SK-N-SH (cell line): ENCODE measurements at regions of chr10 and their contacts with region 1.

Region 1: GRCh38 chr10:43078987-43079275 is 2.1 kb downstream of the RET start:
- DNase-seq: peak; percentile 86
- H3K4me3 ChIP-seq: peak overlapping the region; percentile 53 to 61; a peak in 3 of 4 replicates
- H3K27ac ChIP-seq: peak overlapping the region in 1 of 2 experiments; percentile 96; a peak in 2 of 4 replicates
- H3K4me1 ChIP-seq: peaks cover 0 to 70% of the 10 kb centered on the region in 2 experiments; a peak in 2 of 4 replicates
- H3K27me3 ChIP-seq: peaks cover 6% of the 10 kb centered on the region
- CTCF ChIP-seq: peak; percentile 67
- EP300 ChIP-seq: no peak
- RAD21 ChIP-seq: peak; percentile 77

Region 2: DNA sequence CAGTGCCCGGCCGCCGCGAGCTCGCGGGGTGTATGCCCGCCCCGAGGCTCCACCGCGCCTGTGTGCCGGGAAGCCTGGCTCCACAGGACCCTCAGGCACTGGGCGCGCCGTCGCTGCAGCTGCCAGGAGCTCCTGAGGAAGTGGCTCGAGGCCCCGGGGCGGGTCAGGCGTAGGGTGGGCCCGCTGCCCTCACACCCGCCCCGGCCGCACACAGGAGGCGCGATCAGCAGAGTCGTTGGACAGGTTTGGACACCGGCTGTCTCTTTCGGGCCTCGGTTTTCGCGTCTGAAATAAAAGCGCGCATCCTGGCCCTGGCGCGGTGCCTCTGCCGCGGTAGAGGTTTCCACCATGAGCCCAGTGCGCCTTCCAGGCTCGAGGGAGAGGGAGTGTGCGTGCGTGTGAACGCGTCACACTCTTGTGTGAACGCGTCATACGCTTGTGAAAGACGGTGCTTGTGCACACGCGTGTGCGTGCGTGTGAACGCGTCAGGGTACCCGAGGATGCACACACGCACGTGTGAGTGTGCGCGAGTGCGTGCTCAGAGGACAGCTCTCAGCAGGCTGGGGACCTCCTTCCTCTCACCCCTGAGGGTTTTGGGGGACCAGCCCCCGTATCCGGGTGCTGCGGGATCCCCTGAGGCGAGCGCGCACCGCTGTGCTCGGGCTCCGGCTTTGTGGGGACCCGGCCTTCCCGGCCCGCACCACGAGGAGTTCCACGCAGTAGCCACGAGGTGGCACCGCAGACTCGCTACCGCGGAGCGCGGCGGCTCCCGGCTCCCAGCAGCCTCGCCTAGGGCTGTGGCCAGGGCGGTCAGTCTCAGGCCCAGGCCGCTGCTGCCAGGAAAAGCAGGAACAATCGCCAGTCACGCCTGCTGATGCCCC is 212.6 kb before region 1 on chr10:
- CTCF ChIA-PET with region 1: interaction called, 143 read pairs
- POLR2A ChIA-PET with region 1: interaction called, 18 read pairs
- DNase-seq: peak; percentile 92
- H3K4me3 ChIP-seq: no peak overlapping the region
- H3K27ac ChIP-seq: peak overlapping the region in 1 of 2 experiments; percentile 74; a peak in 2 of 4 replicates
- H3K4me1 ChIP-seq: peaks cover 0 to 43% of the 10 kb centered on the region in 2 experiments; a peak in 2 of 4 replicates
- H3K27me3 ChIP-seq: no peaks in the 10 kb centered on the region
- CTCF ChIP-seq: peak; percentile 67
- EP300 ChIP-seq: no peak
- RAD21 ChIP-seq: peak; percentile 89

Region 3: GRCh38 chr10:42940487-42941294 is 138.2 kb before region 1 on chr10:
- CTCF ChIA-PET with region 1: interaction called, 11 read pairs
- POLR2A ChIA-PET with region 1: no interaction called
- DNase-seq: peak; percentile 60
- H3K4me3 ChIP-seq: no peak overlapping the region; a peak in 1 of 4 replicates
- H3K27ac ChIP-seq: peak overlapping the region in 1 of 2 experiments; percentile 83; a peak in 2 of 4 replicates
- H3K4me1 ChIP-seq: peaks cover 0 to 48% of the 10 kb centered on the region in 2 experiments; a peak in 2 of 4 replicates
- H3K27me3 ChIP-seq: no peaks in the 10 kb centered on the region
- CTCF ChIP-seq: no peak
- EP300 ChIP-seq: no peak
- RAD21 ChIP-seq: peak; percentile 3; the same call in 1 of the 2 replicates

Region 4: DNA sequence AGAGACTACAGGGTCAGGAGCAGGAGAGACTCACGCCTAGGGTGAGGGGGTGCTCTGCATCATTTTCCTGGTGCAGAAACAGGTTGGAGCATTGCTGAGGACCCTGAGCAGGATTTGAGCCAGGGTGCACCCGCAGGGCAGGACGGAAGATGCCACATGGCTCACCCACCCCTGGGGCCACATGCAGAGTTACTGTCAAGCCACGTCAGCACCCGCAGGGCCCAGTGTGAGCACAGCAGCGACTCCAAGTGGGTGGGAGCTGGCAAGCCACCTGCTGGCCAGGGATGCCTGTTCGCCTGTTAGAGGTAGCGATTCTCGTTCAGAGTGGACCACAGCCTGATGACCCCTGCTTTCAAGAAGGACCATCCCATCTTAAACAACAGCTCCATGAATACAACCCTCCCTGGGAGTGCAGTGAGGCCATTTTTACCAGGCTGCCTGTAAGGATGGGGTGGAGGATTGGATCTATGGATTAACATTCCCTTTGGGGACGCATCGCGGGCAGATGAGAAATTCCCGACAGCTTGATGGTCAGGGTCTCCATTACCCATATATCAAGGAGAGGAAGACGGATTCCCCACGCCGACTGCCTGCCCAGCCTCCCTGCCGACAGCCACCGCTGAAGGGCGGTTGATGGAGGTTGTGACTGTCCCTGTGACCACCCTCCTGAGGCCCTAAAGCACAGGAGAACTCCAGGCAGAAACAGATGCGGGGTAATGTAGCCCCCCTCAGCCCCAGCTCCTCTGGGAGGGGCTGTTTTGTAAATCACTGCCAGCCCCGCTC is 103.2 kb before region 1 on chr10:
- CTCF ChIA-PET with region 1: interaction called, 130 read pairs
- POLR2A ChIA-PET with region 1: interaction called, 75 read pairs
- DNase-seq: peak; percentile 44
- H3K4me3 ChIP-seq: no peak overlapping the region
- H3K27ac ChIP-seq: peak overlapping the region in 1 of 2 experiments; percentile 88; a peak in 2 of 4 replicates
- H3K4me1 ChIP-seq: peaks cover 0 to 76% of the 10 kb centered on the region in 2 experiments; a peak in 2 of 4 replicates
- H3K27me3 ChIP-seq: no peaks in the 10 kb centered on the region
- CTCF ChIP-seq: no peak
- EP300 ChIP-seq: no peak
- RAD21 ChIP-seq: no peak; the same call in 1 of the 2 replicates

Region 5: GRCh38 chr10:42987121-42987541 is 91.8 kb before region 1 on chr10:
- CTCF ChIA-PET with region 1: interaction called, 130 read pairs
- POLR2A ChIA-PET with region 1: interaction called, 14 read pairs
- DNase-seq: no peak
- H3K4me3 ChIP-seq: no peak overlapping the region
- H3K27ac ChIP-seq: no peak overlapping the region; a peak in 1 of 4 replicates
- H3K4me1 ChIP-seq: peaks cover 0 to 71% of the 10 kb centered on the region in 2 experiments; a peak in 1 of 4 replicates
- H3K27me3 ChIP-seq: no peaks in the 10 kb centered on the region
- CTCF ChIP-seq: no peak
- EP300 ChIP-seq: no peak
- RAD21 ChIP-seq: no peak

Region 6: DNA sequence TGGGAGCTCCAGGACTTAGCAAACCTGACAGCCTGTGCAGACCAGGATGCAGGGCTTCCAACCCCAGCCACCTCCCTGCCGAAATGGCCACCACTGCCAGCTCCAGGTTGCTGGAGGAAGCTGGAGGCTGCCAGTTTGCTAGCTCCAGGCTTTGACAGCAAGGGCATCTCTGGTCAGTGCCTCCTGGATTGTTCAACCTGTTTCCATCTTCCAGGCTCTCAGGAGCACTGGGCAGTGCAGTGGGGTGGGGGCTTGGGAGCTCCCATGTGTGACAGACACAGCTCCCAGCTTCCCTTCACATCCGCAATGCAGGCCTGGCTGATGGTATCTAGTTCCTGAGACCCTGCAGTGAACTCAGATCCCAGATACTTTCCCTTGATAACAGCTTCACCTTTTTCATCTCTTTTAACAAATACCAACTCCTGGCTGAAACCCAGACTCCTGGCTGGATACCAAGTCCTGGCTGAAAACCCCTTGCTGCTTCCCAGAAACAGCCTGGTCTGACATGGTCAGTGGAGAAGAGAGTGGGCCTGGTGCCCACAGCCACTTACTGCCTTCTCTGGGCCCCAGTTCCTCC is 22.9 kb before region 1 on chr10:
- CTCF ChIA-PET with region 1: interaction called, 16 read pairs
- POLR2A ChIA-PET with region 1: interaction called, 28 read pairs
- DNase-seq: peak; percentile 87
- H3K4me3 ChIP-seq: no peak overlapping the region
- H3K27ac ChIP-seq: peak overlapping the region in 1 of 2 experiments; percentile 100; a peak in 2 of 4 replicates
- H3K4me1 ChIP-seq: peaks cover 0 to 77% of the 10 kb centered on the region in 2 experiments; a peak in 2 of 4 replicates
- H3K27me3 ChIP-seq: no peaks in the 10 kb centered on the region
- CTCF ChIP-seq: no peak
- EP300 ChIP-seq: peak in 1 of 2 experiments; percentile 100; a peak in 2 of 4 replicates
- RAD21 ChIP-seq: peak; percentile 35

Region 7: GRCh38 chr10:43105102-43105785 is 26.3 kb after region 1 on chr10:
- CTCF ChIA-PET with region 1: interaction called, 20 read pairs
- POLR2A ChIA-PET with region 1: interaction called, 3 read pairs
- DNase-seq: peak; percentile 95
- H3K4me3 ChIP-seq: peak overlapping the region; percentile 27 to 48; a peak in 2 of 4 replicates
- H3K27ac ChIP-seq: peak overlapping the region in 1 of 2 experiments; percentile 51; a peak in 1 of 4 replicates
- H3K4me1 ChIP-seq: peaks cover 0 to 63% of the 10 kb centered on the region in 2 experiments; a peak in 1 of 4 replicates
- H3K27me3 ChIP-seq: no peaks in the 10 kb centered on the region
- CTCF ChIP-seq: peak; percentile 91
- EP300 ChIP-seq: no peak
- RAD21 ChIP-seq: peak; percentile 86

Region 8: GRCh38 chr10:43156590-43157341 is 77.8 kb after region 1 on chr10:
- CTCF ChIA-PET with region 1: no interaction called
- POLR2A ChIA-PET with region 1: no interaction called
- DNase-seq: no peak
- H3K4me3 ChIP-seq: no peak overlapping the region
- H3K27ac ChIP-seq: no peak overlapping the region; a peak in 1 of 4 replicates
- H3K4me1 ChIP-seq: peaks cover 0 to 5% of the 10 kb centered on the region in 2 experiments; a peak in 2 of 4 replicates
- H3K27me3 ChIP-seq: no peaks in the 10 kb centered on the region
- CTCF ChIP-seq: no peak
- EP300 ChIP-seq: no peak
- RAD21 ChIP-seq: no peak

Region 9: GRCh38 chr10:43444313-43444712 is 365.4 kb after region 1 on chr10:
- CTCF ChIA-PET with region 1: no interaction called
- POLR2A ChIA-PET with region 1: no interaction called
- DNase-seq: no peak
- H3K4me3 ChIP-seq: no peak overlapping the region
- H3K27ac ChIP-seq: no peak overlapping the region
- H3K4me1 ChIP-seq: no peaks in the 10 kb centered on the region
- H3K27me3 ChIP-seq: no peaks in the 10 kb centered on the region
- CTCF ChIP-seq: no peak
- EP300 ChIP-seq: no peak
- RAD21 ChIP-seq: no peak